PC-3 (cell line): ENCODE measurements at regions of chr1 and their contacts with region 1.

Region 1: DNA sequence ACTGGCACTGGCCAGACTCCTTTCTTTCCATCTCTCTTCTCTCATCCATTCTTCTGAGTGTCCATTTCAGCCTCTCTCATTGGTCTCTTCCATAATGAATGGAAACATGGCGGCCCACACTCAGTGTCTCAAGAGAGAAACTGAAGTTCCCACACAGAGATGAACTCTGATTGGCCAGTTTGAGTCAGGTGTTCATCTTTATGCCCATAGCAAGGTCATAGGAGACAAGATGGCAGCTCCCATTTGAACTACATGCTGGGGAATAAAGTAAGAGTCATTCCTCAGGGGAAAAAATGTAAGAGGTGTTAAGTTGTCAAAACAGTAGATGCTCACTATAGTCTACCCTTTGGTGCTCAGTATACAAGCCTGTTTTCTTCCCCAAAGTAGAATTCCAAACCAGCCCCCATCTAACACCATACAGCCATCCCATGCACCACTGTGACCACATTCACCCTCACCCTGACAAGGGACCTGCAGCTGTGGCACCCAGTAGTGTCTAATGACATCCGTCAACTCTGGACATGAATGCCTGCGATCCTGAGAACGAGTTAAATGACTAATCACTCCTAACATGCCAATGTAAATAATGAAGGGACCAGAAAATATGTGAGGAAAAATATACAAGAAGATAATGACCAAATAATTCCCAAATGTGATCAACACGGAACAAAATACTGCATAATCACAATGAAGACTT is 12.4 kb downstream of the CDA start:
- DNase-seq: peak; percentile 84
- ATAC-seq: peak; percentile 71
- H3K4me3 ChIP-seq: no peak overlapping the region
- H3K27ac ChIP-seq: peak overlapping the region; percentile 97
- H3K4me1 ChIP-seq: peaks cover 56% of the 10 kb centered on the region
- H3K27me3 ChIP-seq: no peaks in the 10 kb centered on the region
- CTCF ChIP-seq: no peak

Region 2: GRCh38 chr1:20539152-20539551 is 62.1 kb before region 1 on chr1:
- CTCF ChIA-PET with region 1: no interaction called
- POLR2A ChIA-PET with region 1: no interaction called
- intact Hi-C with region 1: loop called (anchors 2 kb)
- DNase-seq: peak; percentile 60
- ATAC-seq: peak; percentile 75
- H3K4me3 ChIP-seq: no peak overlapping the region
- H3K27ac ChIP-seq: peak overlapping the region; percentile 80
- H3K4me1 ChIP-seq: peaks cover 29% of the 10 kb centered on the region
- H3K27me3 ChIP-seq: no peaks in the 10 kb centered on the region
- CTCF ChIP-seq: no peak